Ovary (tissue), 10 donors: ENCODE measurements at regions of chr20 and their contacts with region 1.

Region 1: DNA sequence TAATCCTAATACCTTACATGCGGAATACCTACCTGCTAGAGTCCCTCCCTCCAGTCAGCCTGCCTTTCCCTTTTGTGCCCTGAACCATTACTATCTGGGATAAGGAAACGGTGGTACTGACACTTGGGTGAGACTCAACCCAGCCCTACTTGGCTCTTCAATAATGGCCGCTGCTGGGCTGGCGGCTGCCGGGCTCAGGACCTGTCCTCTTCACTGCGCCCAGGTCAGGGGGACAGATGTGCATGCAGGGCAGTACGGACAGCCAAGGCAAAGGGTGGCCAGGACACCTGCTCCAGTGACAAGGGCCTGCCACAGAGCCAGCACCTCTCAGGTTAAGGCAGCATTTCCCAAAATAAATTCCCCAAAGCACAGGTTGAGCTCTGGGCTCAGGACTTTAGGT is 29.9 kb downstream of the UBE2V1 start:
- DNase-seq: peak in 2 of 5 donors; percentile 8 to 15
- H3K4me3 ChIP-seq: no peak overlapping the region
- H3K27ac ChIP-seq: no peak overlapping the region
- H3K4me1 ChIP-seq: peaks cover 11% of the 10 kb centered on the region
- H3K27me3 ChIP-seq: no peaks in the 10 kb centered on the region
- CTCF ChIP-seq: no peak
- EP300 ChIP-seq: no peak
- POLR2A ChIP-seq: no peak

Region 2: GRCh38 chr20:48769069-48769879 is 1313.8 kb before region 1 on chr20:
- intact Hi-C with region 1: loop called in 1 of 4 experiments (anchors 5 kb)
- DNase-seq: no peak
- H3K4me3 ChIP-seq: no peak overlapping the region
- H3K27ac ChIP-seq: no peak overlapping the region
- H3K4me1 ChIP-seq: peaks cover 2% of the 10 kb centered on the region
- H3K27me3 ChIP-seq: no peaks in the 10 kb centered on the region
- CTCF ChIP-seq: no peak
- EP300 ChIP-seq: no peak
- POLR2A ChIP-seq: no peak